ENCODE measurements at regions of chr12 and their contacts with region 1.

Region 1: GRCh38 chr12:92145731-92146496 is at the start of gene BTG1:
- DNase-seq: peak; percentile 99 to 100 (median 100)
- H3K4me3 ChIP-seq: peak within 1 kb of the TSS; percentile 89 to 96
- H3K4me3 Mint-ChIP-seq: peak within 1 kb of the TSS; percentile 92 to 100 (median 100)
- H3K27ac ChIP-seq: peak within 1 kb of the TSS; percentile 86
- H3K27ac Mint-ChIP-seq: peak within 1 kb of the TSS; percentile 95 to 100 (median 100)
- H3K4me1 ChIP-seq: peaks cover 23% of the 10 kb centered on the region
- H3K4me1 Mint-ChIP-seq: peaks cover 9 to 37% (median 21%) of the 10 kb centered on the region in 4 donors
- H3K27me3 ChIP-seq: no peaks in the 10 kb centered on the region
- H3K27me3 Mint-ChIP-seq: no peaks in the 10 kb centered on the region
- total RNA-seq, gene BTG1: 431 to 469 TPM

Region 2: GRCh38 chr12:91871751-91872150 is 274.2 kb before region 1 on chr12:
- CTCF ChIA-PET with region 1: interaction called, 3 read pairs
- POLR2A ChIA-PET with region 1: interaction called, 239 read pairs
- intact Hi-C with region 1: no loop called
- DNase-seq: no peak
- H3K4me3 ChIP-seq: no peak overlapping the region
- H3K4me3 Mint-ChIP-seq: peak overlapping the region; percentile 1 to 81 (median 42)
- H3K27ac ChIP-seq: peak overlapping the region; percentile 56
- H3K27ac Mint-ChIP-seq: peak overlapping the region; percentile 83 to 99 (median 94)
- H3K4me1 ChIP-seq: peaks cover 64% of the 10 kb centered on the region
- H3K4me1 Mint-ChIP-seq: peaks cover 45 to 74% (median 57%) of the 10 kb centered on the region in 4 donors
- H3K27me3 ChIP-seq: no peaks in the 10 kb centered on the region
- H3K27me3 Mint-ChIP-seq: no peaks in the 10 kb centered on the region

Region 3: DNA sequence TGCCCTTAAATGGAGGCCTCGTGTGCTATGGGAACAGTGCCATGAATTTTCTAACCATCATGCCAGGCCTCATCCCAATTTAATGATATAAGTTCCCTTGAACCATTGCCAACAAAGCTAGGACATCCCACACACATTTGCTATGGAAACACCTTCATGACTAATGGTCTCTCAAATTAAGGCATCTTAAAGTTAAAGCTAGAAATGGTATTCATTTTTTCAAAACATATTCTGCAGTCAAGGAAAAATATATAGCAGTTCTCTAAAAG is 117.5 kb before region 1 on chr12:
- CTCF ChIA-PET with region 1: interaction called, 46 read pairs
- POLR2A ChIA-PET with region 1: interaction called, 525 read pairs
- intact Hi-C with region 1: loop called (anchors 1 kb)
- DNase-seq: no peak
- H3K4me3 ChIP-seq: no peak overlapping the region
- H3K4me3 Mint-ChIP-seq: peak overlapping the region in 6 of 8 donors; percentile 1 to 87 (median 70)
- H3K27ac ChIP-seq: no peak overlapping the region
- H3K27ac Mint-ChIP-seq: peak overlapping the region; percentile 86 to 98 (median 97)
- H3K4me1 ChIP-seq: peaks cover 76% of the 10 kb centered on the region
- H3K4me1 Mint-ChIP-seq: peaks cover 62 to 82% (median 66%) of the 10 kb centered on the region in 4 donors
- H3K27me3 ChIP-seq: no peaks in the 10 kb centered on the region
- H3K27me3 Mint-ChIP-seq: no peaks in the 10 kb centered on the region

Region 4: DNA sequence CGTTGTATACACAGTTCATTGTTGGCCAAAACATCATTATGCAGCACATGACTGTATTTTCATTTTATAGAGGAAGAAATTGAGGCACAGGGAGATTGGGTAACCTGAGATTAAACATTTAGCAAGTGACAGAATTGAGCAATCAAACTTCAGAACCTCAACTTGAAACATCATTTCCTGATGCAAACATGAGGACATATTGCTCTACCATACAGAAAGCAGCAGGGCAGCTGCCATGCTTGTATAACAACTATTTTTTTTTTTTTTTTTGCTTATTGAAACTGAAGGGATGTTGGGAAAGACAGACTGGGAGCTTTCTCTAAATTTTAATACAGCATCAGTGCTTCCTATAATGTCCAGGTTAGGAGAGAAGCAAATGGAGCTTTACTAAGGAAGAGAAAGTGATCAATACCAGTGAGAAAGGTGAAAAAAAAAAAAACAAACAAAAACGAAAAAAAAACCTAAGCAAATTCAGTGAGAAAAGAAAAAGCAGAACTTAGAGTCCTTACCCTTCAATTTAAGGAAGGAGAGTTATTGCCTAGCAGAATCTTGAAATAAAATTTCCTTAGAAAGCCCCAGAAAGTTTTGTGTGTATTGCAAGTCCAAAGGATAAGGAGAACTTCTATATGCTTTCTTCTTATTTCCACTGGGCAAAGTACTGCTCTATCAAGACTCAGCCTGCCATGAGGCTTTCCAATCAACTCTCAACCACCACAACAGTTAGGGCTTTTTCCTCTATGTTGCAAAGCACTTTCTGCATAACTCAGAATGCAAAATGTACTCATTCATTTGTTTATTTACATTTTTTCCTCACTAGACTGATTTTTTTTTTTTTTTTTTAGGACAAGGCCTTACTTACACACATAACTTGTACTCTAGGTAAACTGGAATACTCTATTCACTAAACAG is 21.9 kb before region 1 on chr12:
- CTCF ChIA-PET with region 1: interaction called, 59 read pairs
- POLR2A ChIA-PET with region 1: interaction called, 441 read pairs
- intact Hi-C with region 1: no loop called
- DNase-seq: no peak
- H3K4me3 ChIP-seq: no peak overlapping the region
- H3K4me3 Mint-ChIP-seq: peak overlapping the region in 2 of 8 donors; percentile 2 to 43
- H3K27ac ChIP-seq: no peak overlapping the region
- H3K27ac Mint-ChIP-seq: peak overlapping the region in 4 of 7 donors; percentile 10 to 83 (median 48)
- H3K4me1 ChIP-seq: peaks cover 36% of the 10 kb centered on the region
- H3K4me1 Mint-ChIP-seq: peaks cover 29 to 65% (median 43%) of the 10 kb centered on the region in 4 donors
- H3K27me3 ChIP-seq: no peaks in the 10 kb centered on the region
- H3K27me3 Mint-ChIP-seq: no peaks in the 10 kb centered on the region

Region 5: DNA sequence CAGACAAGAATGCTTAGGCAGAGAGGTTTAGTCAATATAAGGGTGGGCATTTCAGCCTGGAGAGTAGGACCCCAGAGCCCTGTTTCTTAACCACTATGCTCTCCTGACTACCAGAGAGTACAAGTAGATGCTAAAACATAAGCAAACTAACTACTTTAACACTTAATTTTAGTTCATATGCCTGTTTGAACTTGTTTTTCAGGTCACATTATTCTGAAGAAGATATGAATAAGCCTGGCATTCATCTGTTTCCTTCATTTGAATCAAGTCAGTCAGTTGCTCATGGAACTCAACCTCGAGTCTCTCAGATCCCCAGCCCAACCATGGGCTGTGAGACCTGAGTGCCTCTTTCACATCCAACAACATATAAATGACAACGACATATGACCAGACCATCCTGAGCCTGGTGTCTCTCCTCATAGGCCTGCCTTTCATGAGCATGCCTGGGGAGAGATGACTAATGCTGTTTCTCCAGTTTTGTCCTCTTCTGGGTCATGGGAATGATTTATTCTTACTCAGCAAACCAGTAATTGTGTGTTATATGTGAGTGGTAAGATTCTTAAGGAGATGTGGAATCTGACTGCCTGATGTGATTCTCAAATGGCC is 250.8 kb after region 1 on chr12:
- CTCF ChIA-PET with region 1: interaction called, 14 read pairs
- POLR2A ChIA-PET with region 1: interaction called, 630 read pairs
- intact Hi-C with region 1: no loop called
- DNase-seq: no peak
- H3K4me3 ChIP-seq: no peak overlapping the region
- H3K4me3 Mint-ChIP-seq: peak overlapping the region in 6 of 8 donors; percentile 19 to 81 (median 57)
- H3K27ac ChIP-seq: peak overlapping the region; percentile 72
- H3K27ac Mint-ChIP-seq: peak overlapping the region; percentile 93 to 98 (median 97)
- H3K4me1 ChIP-seq: peaks cover 93% of the 10 kb centered on the region
- H3K4me1 Mint-ChIP-seq: peaks cover 74 to 100% (median 89%) of the 10 kb centered on the region in 4 donors
- H3K27me3 ChIP-seq: no peaks in the 10 kb centered on the region
- H3K27me3 Mint-ChIP-seq: no peaks in the 10 kb centered on the region

Region 6: DNA sequence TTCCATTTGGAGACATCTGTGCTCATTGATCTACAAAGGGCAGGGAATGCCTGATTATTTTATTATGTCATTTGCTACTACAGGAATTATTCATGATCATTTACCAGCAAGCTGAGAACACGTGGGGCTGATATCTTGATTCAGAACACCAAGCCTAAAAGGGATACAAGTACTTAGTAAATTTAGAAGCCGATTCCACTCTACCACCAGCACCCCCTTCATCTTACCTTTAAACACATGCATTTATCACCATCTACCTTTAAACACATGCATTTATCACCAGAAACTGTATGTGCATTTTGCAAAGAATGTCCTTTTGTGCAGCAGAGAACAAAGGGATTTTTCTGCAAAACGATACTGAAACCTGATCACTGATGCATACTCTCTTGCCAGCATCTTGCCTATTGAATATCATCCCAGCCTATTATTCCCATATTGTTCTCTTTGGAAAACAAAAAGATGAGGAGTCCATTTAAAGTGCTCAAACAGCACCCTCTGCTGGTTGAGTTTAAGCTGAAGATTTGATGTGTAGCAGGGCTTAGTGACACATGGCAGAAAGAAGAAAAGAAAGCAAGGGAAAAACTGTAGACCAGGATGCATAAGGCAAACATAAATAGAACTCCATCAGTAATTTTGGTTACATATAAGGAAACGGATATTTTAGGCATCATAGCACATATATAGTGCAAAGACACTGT is 424.3 kb after region 1 on chr12:
- CTCF ChIA-PET with region 1: interaction called, 19 read pairs
- POLR2A ChIA-PET with region 1: interaction called, 220 read pairs
- intact Hi-C with region 1: loop called (anchors 1 kb)
- DNase-seq: peak; percentile 54 to 76 (median 74)
- H3K4me3 ChIP-seq: no peak overlapping the region
- H3K4me3 Mint-ChIP-seq: no peak overlapping the region
- H3K27ac ChIP-seq: no peak overlapping the region
- H3K27ac Mint-ChIP-seq: no peak overlapping the region
- H3K4me1 ChIP-seq: peaks cover 26% of the 10 kb centered on the region
- H3K4me1 Mint-ChIP-seq: peaks cover 4 to 17% (median 10%) of the 10 kb centered on the region in 4 donors
- H3K27me3 ChIP-seq: no peaks in the 10 kb centered on the region
- H3K27me3 Mint-ChIP-seq: no peaks in the 10 kb centered on the region

Region 7: DNA sequence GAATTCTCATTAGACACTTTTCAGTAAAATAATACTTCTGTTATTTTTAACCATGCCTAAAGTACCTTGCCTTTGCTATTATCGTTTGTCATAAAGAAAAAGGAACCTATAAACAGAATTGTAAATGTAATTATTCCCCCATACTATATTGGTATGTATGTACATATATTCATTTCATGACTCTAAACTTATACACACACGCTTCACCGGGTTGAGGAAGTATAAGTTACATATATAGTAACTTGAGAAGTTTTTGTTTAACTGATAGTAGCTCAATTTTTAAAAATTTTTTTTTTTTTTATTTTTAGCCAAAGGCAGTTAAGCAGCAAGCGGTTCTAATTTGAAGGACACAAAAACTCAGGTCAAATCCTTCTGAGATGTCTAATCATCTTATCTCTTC is 664.5 kb after region 1 on chr12:
- CTCF ChIA-PET with region 1: no interaction called
- POLR2A ChIA-PET with region 1: no interaction called
- intact Hi-C with region 1: no loop called
- DNase-seq: no peak
- H3K4me3 ChIP-seq: no peak overlapping the region
- H3K4me3 Mint-ChIP-seq: no peak overlapping the region
- H3K27ac ChIP-seq: no peak overlapping the region
- H3K27ac Mint-ChIP-seq: no peak overlapping the region
- H3K4me1 ChIP-seq: no peaks in the 10 kb centered on the region
- H3K4me1 Mint-ChIP-seq: peaks cover 0 to 1% (median 0%) of the 10 kb centered on the region in 4 donors
- H3K27me3 ChIP-seq: no peaks in the 10 kb centered on the region
- H3K27me3 Mint-ChIP-seq: no peaks in the 10 kb centered on the region